ENCODE measurements at regions of chr3 and their contacts with region 1.

Region 1: DNA sequence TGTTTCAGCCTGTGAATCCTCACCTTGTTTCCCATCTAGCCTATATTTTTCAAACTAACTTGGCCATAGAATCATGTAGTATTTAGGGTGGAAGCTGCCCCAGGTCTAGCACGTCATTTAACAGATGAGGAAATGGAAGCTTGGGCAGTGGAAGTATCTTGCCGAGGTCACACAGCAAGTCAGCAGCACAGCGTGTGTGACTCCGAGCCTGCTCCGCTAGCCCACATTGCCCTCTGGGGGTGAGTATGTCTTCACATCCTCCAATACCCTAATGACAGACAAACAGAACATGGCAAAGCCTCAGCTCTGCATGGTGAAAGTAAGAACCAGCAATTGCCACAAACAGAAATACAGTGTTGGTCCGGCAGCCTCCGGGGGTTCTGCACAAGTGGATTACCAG is 2.2 kb upstream of the CCR5 start:
- DNase-seq: peak; percentile 37 to 87 (median 61)
- H3K4me3 ChIP-seq: no peak overlapping the region
- H3K4me3 Mint-ChIP-seq: peak overlapping the region; percentile 63 to 91 (median 71)
- H3K27ac ChIP-seq: peak overlapping the region; percentile 22
- H3K27ac Mint-ChIP-seq: peak overlapping the region; percentile 89 to 98 (median 96)
- H3K4me1 ChIP-seq: peaks cover 48% of the 10 kb centered on the region
- H3K4me1 Mint-ChIP-seq: peaks cover 64 to 91% (median 85%) of the 10 kb centered on the region in 3 donors
- H3K27me3 ChIP-seq: no peaks in the 10 kb centered on the region
- H3K27me3 Mint-ChIP-seq: peaks cover 0 to 2% of the 10 kb centered on the region in 2 donors

Region 2: GRCh38 chr3:45938864-45939263 is 429.7 kb before region 1 on chr3:
- CTCF ChIA-PET with region 1: interaction called, 14 read pairs
- POLR2A ChIA-PET with region 1: interaction called, 3 read pairs
- DNase-seq: peak; percentile 74 to 87 (median 76)
- H3K4me3 ChIP-seq: no peak overlapping the region
- H3K4me3 Mint-ChIP-seq: peak overlapping the region in 1 of 7 donors; percentile 42
- H3K27ac ChIP-seq: no peak overlapping the region
- H3K27ac Mint-ChIP-seq: peak overlapping the region in 5 of 8 donors; percentile 13 to 79 (median 62)
- H3K4me1 ChIP-seq: peaks cover 30% of the 10 kb centered on the region
- H3K4me1 Mint-ChIP-seq: peaks cover 47 to 64% (median 55%) of the 10 kb centered on the region in 3 donors
- H3K27me3 ChIP-seq: no peaks in the 10 kb centered on the region
- H3K27me3 Mint-ChIP-seq: no peaks in the 10 kb centered on the region

Region 3: DNA sequence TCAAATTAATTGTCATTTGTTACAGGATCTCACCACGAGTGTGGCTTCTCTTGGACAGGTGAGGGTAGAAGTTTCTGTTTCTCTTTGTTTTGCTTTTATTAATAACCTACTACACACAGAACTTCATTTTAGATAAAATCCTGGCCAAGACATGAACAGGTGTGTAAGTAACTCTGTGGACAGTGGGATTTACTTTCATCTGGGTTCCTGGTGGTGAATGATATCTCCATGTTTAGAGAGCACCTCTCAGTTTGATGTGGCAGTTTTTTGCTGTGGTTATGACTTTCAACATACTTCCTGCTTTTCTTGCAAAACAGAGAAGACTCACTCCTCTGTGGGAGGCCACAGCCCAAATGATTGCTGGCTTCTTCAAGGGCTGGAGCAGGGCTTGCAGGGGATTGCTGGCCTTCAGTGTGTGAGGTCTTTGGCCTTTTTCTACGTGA is 270.2 kb before region 1 on chr3:
- CTCF ChIA-PET with region 1: interaction called, 76 read pairs
- POLR2A ChIA-PET with region 1: interaction called, 6 read pairs
- DNase-seq: peak in 2 of 5 donors; percentile 50 to 52
- H3K4me3 ChIP-seq: no peak overlapping the region
- H3K4me3 Mint-ChIP-seq: peak overlapping the region; percentile 4 to 80 (median 67)
- H3K27ac ChIP-seq: peak overlapping the region; percentile 26
- H3K27ac Mint-ChIP-seq: peak overlapping the region; percentile 74 to 98 (median 94)
- H3K4me1 ChIP-seq: peaks cover 47% of the 10 kb centered on the region
- H3K4me1 Mint-ChIP-seq: peaks cover 53 to 71% (median 68%) of the 10 kb centered on the region in 3 donors
- H3K27me3 ChIP-seq: no peaks in the 10 kb centered on the region
- H3K27me3 Mint-ChIP-seq: no peaks in the 10 kb centered on the region

Region 4: DNA sequence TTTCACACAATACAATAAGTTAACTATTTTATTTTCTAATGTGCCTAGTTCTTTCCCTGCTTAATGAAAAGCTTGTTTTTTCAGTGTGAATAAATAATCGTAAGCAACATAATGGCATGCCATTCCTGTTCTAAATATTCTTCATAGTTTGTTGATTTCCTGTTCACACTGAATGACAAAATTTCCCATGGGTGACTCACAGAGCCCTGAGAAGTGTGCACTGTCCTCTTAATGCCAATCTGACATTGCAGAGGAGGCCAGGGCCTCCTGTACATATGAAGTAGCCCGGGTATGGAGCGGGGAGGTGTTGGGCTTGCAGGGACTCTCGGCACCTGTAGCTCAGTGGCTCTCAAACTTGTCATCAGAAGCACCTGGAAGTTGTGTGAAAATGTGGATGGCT is 102.0 kb before region 1 on chr3:
- CTCF ChIA-PET with region 1: interaction called, 20 read pairs
- POLR2A ChIA-PET with region 1: no interaction called
- DNase-seq: no peak
- H3K4me3 ChIP-seq: no peak overlapping the region
- H3K4me3 Mint-ChIP-seq: no peak overlapping the region
- H3K27ac ChIP-seq: no peak overlapping the region
- H3K27ac Mint-ChIP-seq: peak overlapping the region in 1 of 8 donors; percentile 37
- H3K4me1 ChIP-seq: peaks cover 12% of the 10 kb centered on the region
- H3K4me1 Mint-ChIP-seq: peaks cover 39 to 57% (median 57%) of the 10 kb centered on the region in 3 donors
- H3K27me3 ChIP-seq: no peaks in the 10 kb centered on the region
- H3K27me3 Mint-ChIP-seq: no peaks in the 10 kb centered on the region

Region 5: DNA sequence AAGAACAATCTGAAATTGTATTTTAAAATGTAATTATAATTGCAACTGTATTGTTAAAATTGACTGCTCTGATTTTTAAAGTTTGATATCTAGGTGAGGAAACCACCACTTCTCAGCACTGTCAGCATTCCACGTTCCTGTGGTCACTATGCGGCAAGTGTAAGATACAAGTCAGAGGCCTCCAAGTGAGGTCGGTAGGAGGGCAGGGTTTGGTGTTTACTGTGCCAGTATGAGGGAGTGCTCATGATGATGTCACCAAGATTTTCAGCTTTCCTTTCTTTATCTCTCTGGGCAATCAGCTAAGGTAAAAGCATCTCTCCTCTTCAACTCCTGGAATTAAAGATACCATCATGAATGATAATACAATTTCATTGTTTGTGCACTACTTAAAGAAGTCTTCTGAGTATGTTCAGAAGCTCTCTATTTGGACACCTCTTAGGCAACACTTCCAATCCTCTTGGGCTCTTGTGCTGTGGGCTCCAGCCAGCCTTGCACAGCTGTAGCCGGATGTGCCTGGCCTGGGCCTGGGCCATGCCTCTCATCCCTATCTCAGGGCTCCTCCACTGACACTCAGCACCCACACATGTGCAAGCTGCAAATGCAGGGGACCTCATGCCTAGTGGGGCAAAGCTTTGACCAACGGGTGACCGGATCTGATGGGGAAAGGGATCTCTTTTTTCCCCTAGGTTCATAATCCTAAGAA is 83.4 kb before region 1 on chr3:
- CTCF ChIA-PET with region 1: interaction called, 56 read pairs
- POLR2A ChIA-PET with region 1: interaction called, 6 read pairs
- DNase-seq: peak; percentile 2 to 71 (median 39)
- H3K4me3 ChIP-seq: no peak overlapping the region
- H3K4me3 Mint-ChIP-seq: peak overlapping the region; percentile 19 to 82 (median 66)
- H3K27ac ChIP-seq: peak overlapping the region; percentile 38
- H3K27ac Mint-ChIP-seq: peak overlapping the region; percentile 77 to 95 (median 88)
- H3K4me1 ChIP-seq: peaks cover 73% of the 10 kb centered on the region
- H3K4me1 Mint-ChIP-seq: peaks cover 72 to 94% (median 91%) of the 10 kb centered on the region in 3 donors
- H3K27me3 ChIP-seq: no peaks in the 10 kb centered on the region
- H3K27me3 Mint-ChIP-seq: peaks cover 0 to 1% of the 10 kb centered on the region in 2 donors

Region 6: GRCh38 chr3:46312991-46313390 is 55.6 kb before region 1 on chr3:
- CTCF ChIA-PET with region 1: interaction called, 12 read pairs
- POLR2A ChIA-PET with region 1: no interaction called
- DNase-seq: no peak
- H3K4me3 ChIP-seq: no peak overlapping the region
- H3K4me3 Mint-ChIP-seq: no peak overlapping the region
- H3K27ac ChIP-seq: no peak overlapping the region
- H3K27ac Mint-ChIP-seq: peak overlapping the region in 1 of 8 donors; percentile 38
- H3K4me1 ChIP-seq: no peaks in the 10 kb centered on the region
- H3K4me1 Mint-ChIP-seq: peaks cover 0 to 17% (median 5%) of the 10 kb centered on the region in 3 donors
- H3K27me3 ChIP-seq: no peaks in the 10 kb centered on the region
- H3K27me3 Mint-ChIP-seq: peaks cover 0 to 3% of the 10 kb centered on the region in 2 donors

Region 7: GRCh38 chr3:46469680-46470357 is 101.2 kb after region 1 on chr3:
- CTCF ChIA-PET with region 1: no interaction called
- POLR2A ChIA-PET with region 1: no interaction called
- DNase-seq: no peak
- H3K4me3 ChIP-seq: no peak overlapping the region
- H3K4me3 Mint-ChIP-seq: no peak overlapping the region
- H3K27ac ChIP-seq: no peak overlapping the region
- H3K27ac Mint-ChIP-seq: no peak overlapping the region
- H3K4me1 ChIP-seq: no peaks in the 10 kb centered on the region
- H3K4me1 Mint-ChIP-seq: peaks cover 0 to 3% (median 0%) of the 10 kb centered on the region in 3 donors
- H3K27me3 ChIP-seq: peaks cover 6% of the 10 kb centered on the region
- H3K27me3 Mint-ChIP-seq: peaks cover 20 to 27% of the 10 kb centered on the region in 2 donors